Gastrocnemius medialis (tissue), 4 donors: ENCODE measurements at regions of chr1 and their contacts with region 1.

Region 1: DNA sequence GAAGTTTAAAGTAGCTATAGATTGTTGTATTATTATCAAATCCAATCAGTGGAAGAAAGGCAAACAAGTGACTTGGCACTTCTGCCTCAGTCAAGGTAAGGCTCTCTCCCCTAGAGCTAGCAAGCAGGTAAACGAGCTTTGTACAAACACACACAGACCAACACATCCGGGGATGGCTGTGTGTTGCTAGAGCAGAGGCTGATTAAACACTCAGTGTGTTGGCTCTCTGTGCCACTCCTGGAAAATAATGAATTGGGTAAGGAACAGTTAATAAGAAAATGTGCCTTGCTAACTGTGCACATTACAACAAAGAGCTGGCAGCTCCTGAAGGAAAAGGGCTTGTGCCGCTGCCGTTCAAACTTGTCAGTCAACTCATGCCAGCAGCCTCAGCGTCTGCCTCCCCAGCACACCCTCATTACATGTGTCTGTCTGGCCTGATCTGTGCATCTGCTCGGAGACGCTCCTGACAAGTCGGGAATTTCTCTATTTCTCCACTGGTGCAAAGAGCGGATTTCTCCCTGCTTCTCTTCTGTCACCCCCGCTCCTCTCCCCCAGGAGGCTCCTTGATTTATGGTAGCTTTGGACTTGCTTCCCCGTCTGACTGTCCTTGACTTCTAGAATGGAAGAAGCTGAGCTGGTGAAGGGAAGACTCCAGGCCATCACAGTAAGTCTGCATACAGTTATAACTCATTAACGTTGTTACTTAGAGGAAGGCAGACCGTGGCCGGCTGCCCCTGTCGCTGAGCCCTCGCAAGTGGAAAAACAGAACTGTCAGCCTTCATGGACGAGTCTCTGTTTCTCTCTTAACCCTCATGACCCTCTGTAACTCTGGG is at the start of gene PALMD:
- DNase-seq: peak; percentile 75 to 84
- ATAC-seq: peak; percentile 73 to 79
- H3K4me3 ChIP-seq: peak within 1 kb of the TSS; percentile 63 to 76 (median 70)
- H3K27ac ChIP-seq: peak within 1 kb of the TSS; percentile 88 to 97 (median 90)
- H3K4me1 ChIP-seq: peaks cover 40 to 44% of the 10 kb centered on the region in 2 donors
- H3K27me3 ChIP-seq: no peaks in the 10 kb centered on the region
- CTCF ChIP-seq: no peak
- POLR2A ChIP-seq: peak; percentile 57 to 66
- total RNA-seq, gene PALMD: 60.7 to 254 (median 79.1) TPM

Region 2: DNA sequence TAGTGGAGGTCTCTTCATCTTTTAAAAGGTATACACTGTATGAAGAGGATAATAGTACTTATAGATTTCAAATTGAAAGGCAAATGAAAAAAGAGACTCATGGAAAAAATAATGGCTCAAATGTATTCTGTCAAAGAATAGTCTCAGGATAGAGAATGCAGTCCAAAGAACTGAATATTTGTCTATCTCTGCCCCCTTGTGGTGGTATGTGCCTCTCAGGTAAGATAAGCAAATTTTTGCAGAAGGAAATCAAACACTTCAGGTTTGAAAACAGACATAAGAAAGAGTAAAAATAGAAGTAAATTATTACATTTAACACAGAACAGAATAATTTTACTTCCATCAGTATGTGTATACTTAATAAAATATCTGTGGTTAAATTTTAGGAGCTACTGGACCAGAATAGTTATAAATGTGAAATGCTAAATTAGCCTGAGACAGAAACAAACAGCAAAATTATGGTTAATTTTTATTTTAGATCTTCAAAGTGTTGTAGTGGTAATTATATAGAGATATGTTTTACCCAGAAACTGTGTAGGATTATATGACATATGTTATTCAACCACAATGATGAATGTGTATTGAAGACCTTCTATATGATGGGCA is 164.4 kb before region 1 on chr1:
- in situ Hi-C with region 1: no loop called
- intact Hi-C with region 1: loop called (anchors 5 kb)
- DNase-seq: peak in 1 of 2 donors; percentile 12
- ATAC-seq: peak; percentile 66 to 71
- H3K4me3 ChIP-seq: no peak overlapping the region
- H3K27ac ChIP-seq: no peak overlapping the region
- H3K4me1 ChIP-seq: no peaks in the 10 kb centered on the region
- H3K27me3 ChIP-seq: no peaks in the 10 kb centered on the region
- CTCF ChIP-seq: peak; percentile 50 to 72 (median 69)
- POLR2A ChIP-seq: no peak

Region 3: DNA sequence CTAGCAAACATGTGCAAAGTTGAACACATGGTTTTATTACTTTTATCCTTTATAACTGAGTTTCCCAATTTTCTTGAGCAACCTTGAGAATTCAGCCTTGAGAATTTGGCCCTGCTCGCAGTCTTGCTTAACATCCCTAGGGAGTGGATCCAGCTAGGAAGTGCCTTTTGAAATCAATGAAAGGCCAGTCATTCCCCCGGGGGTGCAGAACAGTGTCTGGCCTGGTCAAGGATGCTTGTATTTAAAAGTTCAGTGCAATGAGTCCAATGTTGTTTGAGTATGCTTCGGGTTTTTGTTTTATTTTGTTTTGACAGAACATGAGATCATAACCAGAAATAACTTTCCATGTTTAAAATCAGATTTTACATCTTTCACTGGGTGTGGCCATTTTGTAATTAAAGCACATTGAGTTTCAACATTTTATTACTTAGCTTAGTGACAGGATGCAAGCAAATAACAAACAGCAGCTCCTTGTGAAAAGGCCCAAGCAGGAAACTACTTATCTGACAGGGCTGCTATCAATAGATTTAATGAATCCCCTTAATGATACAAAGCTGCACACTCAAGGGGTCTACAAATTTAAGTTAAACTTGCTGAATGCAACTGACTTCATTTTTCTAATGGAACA is 16.8 kb after region 1 on chr1:
- in situ Hi-C with region 1: no loop called
- intact Hi-C with region 1: loop called (anchors 2 kb)
- DNase-seq: peak; percentile 79 to 87
- ATAC-seq: peak; percentile 81
- H3K4me3 ChIP-seq: no peak overlapping the region
- H3K27ac ChIP-seq: peak overlapping the region; percentile 88 to 97 (median 90)
- H3K4me1 ChIP-seq: peaks cover 64 to 83% of the 10 kb centered on the region in 2 donors
- H3K27me3 ChIP-seq: no peaks in the 10 kb centered on the region
- CTCF ChIP-seq: no peak
- POLR2A ChIP-seq: peak in 1 of 2 donors; percentile 22

Region 4: GRCh38 chr1:99672500-99673213 is 26.7 kb after region 1 on chr1:
- in situ Hi-C with region 1: no loop called
- intact Hi-C with region 1: loop called (anchors 1 kb)
- DNase-seq: peak; percentile 55 to 82
- ATAC-seq: peak; percentile 72 to 91
- H3K4me3 ChIP-seq: peak overlapping the region in 1 of 4 donors; percentile 13
- H3K27ac ChIP-seq: peak overlapping the region; percentile 88 to 97 (median 90)
- H3K4me1 ChIP-seq: peaks cover 92 to 95% of the 10 kb centered on the region in 2 donors
- H3K27me3 ChIP-seq: no peaks in the 10 kb centered on the region
- CTCF ChIP-seq: no peak
- POLR2A ChIP-seq: peak in 1 of 2 donors; percentile 13

Region 5: GRCh38 chr1:99685516-99686180 is 39.7 kb after region 1 on chr1:
- in situ Hi-C with region 1: no loop called
- intact Hi-C with region 1: loop called (anchors 1 kb)
- DNase-seq: peak; percentile 93 to 99
- ATAC-seq: peak; percentile 95 to 96
- H3K4me3 ChIP-seq: no peak overlapping the region
- H3K27ac ChIP-seq: peak overlapping the region; percentile 79 to 97 (median 90)
- H3K4me1 ChIP-seq: peaks cover 50 to 55% of the 10 kb centered on the region in 2 donors
- H3K27me3 ChIP-seq: no peaks in the 10 kb centered on the region
- CTCF ChIP-seq: peak; percentile 18 to 73 (median 64)
- POLR2A ChIP-seq: no peak

Region 6: GRCh38 chr1:100452641-100453040 is 806.7 kb after region 1 on chr1:
- in situ Hi-C with region 1: no loop called
- intact Hi-C with region 1: no loop called
- DNase-seq: no peak
- ATAC-seq: peak; percentile 56 to 84
- H3K4me3 ChIP-seq: no peak overlapping the region
- H3K27ac ChIP-seq: peak overlapping the region in 1 of 4 donors; percentile 22
- H3K4me1 ChIP-seq: no peaks in the 10 kb centered on the region
- H3K27me3 ChIP-seq: no peaks in the 10 kb centered on the region
- CTCF ChIP-seq: no peak
- POLR2A ChIP-seq: no peak